ENCODE measurements at regions of chr3 and their contacts with region 1.

Region 1: DNA sequence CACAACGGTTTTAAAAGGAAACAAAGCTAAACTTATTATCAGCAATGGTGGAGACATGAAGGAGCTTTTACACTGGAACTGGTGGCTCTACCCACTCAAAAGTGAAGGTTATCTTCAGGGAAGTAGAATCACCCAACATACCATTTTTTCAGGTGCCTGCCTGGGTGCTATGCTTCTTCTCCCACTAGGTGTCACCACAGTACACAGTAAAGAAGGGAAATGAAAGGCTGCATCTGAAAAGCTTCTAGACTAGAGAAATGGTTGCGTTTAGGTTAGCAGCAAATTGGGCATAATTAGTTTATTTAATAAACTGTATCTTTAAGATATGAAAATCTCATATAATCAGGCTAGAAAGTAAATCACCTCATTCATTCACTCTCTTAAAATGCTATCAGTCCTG is 47.0 kb upstream of the SELENOK start:
- DNase-seq: no peak
- ATAC-seq: peak; percentile 57

Region 2: DNA sequence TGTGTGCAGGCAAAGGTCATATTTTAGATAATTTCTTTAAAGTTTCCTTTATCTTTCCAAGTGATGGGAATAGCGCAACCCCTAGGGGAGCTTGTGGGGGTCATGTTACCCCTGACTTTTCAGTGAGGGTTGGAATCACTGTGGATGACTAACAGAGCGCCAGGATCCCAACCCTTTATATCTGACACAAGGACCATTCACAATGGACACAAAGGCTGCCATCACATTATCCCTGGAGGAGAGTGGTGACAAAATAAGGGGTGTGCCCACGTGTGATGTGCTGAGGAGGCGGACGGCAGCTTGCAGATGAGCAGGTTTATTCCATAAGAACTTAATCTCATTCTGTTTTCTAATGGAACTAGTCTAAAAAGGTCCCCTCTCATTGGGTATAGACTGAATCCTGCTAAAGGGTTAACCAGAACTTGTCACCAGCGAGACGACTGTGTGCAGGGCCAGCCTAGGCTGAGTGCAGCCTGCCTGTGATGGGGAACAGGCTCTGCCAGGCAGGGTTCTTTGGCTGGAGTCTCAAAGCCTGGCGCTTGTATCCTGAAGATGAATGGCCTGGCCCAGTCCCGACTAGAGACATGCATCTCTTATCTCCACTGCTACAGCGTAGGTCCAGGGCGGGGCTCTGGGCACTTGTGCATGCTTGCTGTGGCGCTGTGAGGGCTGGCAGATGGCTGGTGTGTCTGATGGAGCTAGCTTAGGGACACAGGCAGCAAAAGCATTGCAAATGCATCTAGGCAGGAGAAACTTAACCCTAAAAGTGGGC is 142.7 kb before region 1 on chr3:
- intact Hi-C with region 1: no loop called
- DNase-seq: peak; percentile 81
- ATAC-seq: peak; percentile 94

Region 3: DNA sequence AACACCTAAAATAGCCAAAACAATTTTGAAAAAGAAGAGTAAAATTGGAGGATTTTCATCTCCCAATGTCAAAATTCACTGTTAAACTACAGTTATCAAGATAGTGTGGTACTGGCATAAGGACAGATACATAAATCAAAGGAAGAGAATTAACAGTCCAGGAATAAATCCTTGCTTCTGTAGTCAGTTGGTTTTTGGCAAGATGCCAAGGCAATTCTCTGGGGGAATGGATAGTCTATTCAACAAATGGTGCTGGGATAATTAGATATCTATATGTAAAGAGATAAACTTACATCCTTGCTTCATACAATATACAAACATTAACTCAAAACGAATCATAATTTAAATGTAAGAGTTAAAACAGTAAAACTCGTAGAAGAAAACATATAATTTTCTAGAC is 10.9 kb after region 1 on chr3:
- intact Hi-C with region 1: no loop called
- DNase-seq: no peak
- ATAC-seq: no peak

Region 4: GRCh38 chr3:54120657-54121413 is 182.2 kb after region 1 on chr3:
- intact Hi-C with region 1: loop called (anchors 5 kb)
- DNase-seq: no peak
- ATAC-seq: no peak

Region 5: GRCh38 chr3:54139630-54140029 is 201.0 kb after region 1 on chr3:
- intact Hi-C with region 1: loop called (anchors 5 kb)
- DNase-seq: no peak
- ATAC-seq: no peak

Region 6: DNA sequence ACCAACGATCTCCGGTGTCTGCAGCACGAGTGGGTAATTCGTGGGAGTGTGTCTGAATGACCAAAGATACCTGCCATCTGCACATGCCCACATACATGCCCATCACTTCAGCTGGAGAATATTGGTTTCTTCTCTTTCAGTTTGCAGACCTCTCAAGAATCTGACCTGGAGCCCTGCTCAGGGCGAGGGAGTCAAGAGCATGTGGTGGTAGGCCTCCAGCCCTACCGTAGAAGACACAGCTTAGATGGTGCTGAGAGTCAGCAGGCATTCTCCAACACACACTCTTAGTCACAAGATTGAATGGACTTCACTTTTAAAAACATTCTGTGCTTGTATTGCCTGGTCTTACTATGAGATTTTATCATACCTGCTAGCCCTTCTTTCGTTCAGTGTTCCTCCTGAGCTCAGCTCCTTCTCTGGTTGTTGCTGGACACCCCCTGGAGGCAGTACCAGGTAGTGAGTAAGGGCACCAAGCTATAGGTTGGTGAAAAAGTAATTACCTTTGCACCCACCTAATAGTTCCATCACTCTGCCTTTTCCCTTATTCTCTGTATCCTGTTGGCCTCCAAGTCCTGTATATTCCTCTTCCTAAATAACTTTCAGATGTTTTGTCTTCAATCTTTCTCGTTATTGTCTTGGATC is 435.7 kb after region 1 on chr3:
- intact Hi-C with region 1: loop called (anchors 5 kb)
- DNase-seq: no peak
- ATAC-seq: no peak

Region 7: GRCh38 chr3:55180936-55181535 is 1242.4 kb after region 1 on chr3:
- intact Hi-C with region 1: loop called (anchors 10 kb)
- DNase-seq: no peak
- ATAC-seq: no peak

Measured in Right ventricle myocardium inferior (tissue), 1 donor.